ENCODE measurements at regions of chr17 and their contacts with region 1.

Region 1: GRCh38 chr17:49556223-49556971 is 19.3 kb upstream of the NXPH3 start:
- DNase-seq: peak; percentile 93

Region 2: GRCh38 chr17:49496183-49496866 is 60.1 kb before region 1 on chr17:
- intact Hi-C with region 1: loop called (anchors 5 kb)
- DNase-seq: peak; percentile 91

Region 3: DNA sequence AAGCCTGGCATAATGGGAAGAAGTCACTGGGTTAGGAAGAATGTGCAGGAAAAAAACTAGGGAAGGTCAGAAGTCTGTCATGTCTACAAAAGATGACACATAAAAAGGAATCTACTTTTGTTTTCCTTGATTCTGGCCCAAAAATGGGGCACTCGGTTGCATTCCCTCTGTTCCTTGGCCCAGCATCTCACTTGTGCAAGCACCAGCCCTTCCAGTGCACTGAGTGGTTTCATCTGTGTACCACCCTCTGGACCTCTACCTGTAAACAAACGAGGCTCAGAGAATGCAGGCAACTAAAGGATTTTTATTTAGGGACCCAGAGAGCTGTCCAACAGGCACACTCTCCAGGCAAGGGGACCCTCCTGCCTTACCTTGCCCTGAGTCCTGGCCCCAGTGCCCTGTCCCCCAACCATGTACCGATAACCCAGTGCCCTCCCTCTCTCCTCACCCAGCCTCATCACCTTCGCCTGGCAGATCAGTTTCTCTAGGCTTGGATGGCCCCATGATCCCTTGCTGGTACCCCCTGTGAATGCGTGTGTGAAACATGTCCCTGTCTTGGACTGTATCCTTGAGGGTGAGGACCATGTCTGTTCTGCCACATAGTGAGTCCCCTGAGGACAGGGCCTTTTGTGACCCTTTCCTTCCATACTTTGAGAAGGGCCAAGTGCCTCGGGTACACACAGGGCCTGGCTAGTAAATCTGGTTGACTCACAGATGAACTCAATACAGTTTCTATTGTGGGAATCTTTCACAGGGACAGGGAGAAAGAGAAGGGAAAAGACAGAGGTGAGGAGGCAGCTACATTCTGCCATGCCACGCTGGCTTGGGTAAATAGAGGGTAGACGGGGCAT is 32.6 kb after region 1 on chr17:
- intact Hi-C with region 1: no loop called
- DNase-seq: no peak